Right cardiac atrium (tissue), 5 donors: ENCODE measurements at regions of chr16 and their contacts with region 1.

Region 1: DNA sequence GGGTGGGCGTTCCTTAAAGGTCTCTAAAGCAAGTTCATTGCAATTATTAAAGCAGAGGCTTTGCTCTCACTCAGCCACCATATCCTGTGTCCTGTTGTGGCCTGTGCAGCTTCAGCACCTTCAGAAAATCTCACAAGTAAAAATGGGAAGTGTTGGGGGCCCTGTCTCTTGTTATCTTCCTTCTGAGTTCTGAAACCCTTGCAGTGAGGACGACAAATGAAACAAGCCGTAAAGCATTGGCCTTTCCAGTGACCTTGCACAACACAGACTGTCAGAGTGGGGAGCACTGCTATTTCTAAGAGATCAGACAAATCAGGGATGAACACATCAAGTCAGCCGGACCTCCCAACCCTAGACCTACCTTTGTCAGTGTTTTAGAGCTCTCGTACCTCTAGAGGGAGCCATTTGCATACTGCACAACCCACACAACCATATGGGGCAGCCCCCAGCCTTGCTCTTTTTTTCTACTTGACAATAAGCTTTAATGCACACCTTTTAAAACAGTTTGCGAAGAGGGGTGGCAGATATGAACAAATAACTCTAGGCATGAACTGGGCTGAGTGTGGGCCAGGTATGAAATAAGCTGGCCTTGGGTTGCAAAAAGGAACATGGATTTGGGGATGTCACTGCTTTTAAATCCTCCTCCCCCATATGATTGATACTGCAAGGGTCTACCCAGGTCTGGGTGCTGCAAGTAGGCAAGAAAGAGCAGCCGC is 89.8 kb downstream of the KATNIP start:
- DNase-seq: no peak
- ATAC-seq: peak; percentile 60 to 65
- H3K4me3 ChIP-seq: no peak overlapping the region
- H3K27ac ChIP-seq: no peak overlapping the region
- H3K4me1 ChIP-seq: no peaks in the 10 kb centered on the region
- H3K27me3 ChIP-seq: no peaks in the 10 kb centered on the region

Region 2: GRCh38 chr16:27867122-27868110 is 227.7 kb after region 1 on chr16:
- intact Hi-C with region 1: loop called in 1 of 4 experiments (anchors 10 kb)
- DNase-seq: peak; percentile 60 to 81 (median 79)
- ATAC-seq: peak; percentile 63 to 77
- H3K4me3 ChIP-seq: no peak overlapping the region
- H3K27ac ChIP-seq: no peak overlapping the region
- H3K4me1 ChIP-seq: no peaks in the 10 kb centered on the region
- H3K27me3 ChIP-seq: no peaks in the 10 kb centered on the region